IMR-90 (cell line): ENCODE measurements at regions of chr5 and their contacts with region 1.

Region 1: GRCh38 chr5:167565032-167565954 is 726.2 kb upstream of the WWC1 start:
- DNase-seq: peak; percentile 20
- ATAC-seq: peak; percentile 73
- H3K4me3 ChIP-seq: no peak overlapping the region
- H3K27ac ChIP-seq: no peak overlapping the region
- H3K4me1 ChIP-seq: no peaks in the 10 kb centered on the region
- H3K27me3 ChIP-seq: no peaks in the 10 kb centered on the region
- CTCF ChIP-seq: peak; percentile 49
- POLR2A ChIP-seq: no peak
- RAD21 ChIP-seq: peak; percentile 54

Region 2: GRCh38 chr5:165630261-165630778 is 1935.0 kb before region 1 on chr5:
- CTCF ChIA-PET with region 1: no interaction called
- POLR2A ChIA-PET with region 1: no interaction called
- dilution Hi-C with region 1: no loop called
- in situ Hi-C with region 1: loop called (anchors 25 kb)
- intact Hi-C with region 1: loop called (anchors 5 kb)
- DNase-seq: peak; percentile 64
- ATAC-seq: peak; percentile 90
- H3K4me3 ChIP-seq: no peak overlapping the region
- H3K27ac ChIP-seq: no peak overlapping the region
- H3K4me1 ChIP-seq: peaks cover 2% of the 10 kb centered on the region; the same call in 1 of the 2 replicates
- H3K27me3 ChIP-seq: no peaks in the 10 kb centered on the region
- CTCF ChIP-seq: peak; percentile 57
- POLR2A ChIP-seq: no peak
- RAD21 ChIP-seq: peak; percentile 41

Region 3: DNA sequence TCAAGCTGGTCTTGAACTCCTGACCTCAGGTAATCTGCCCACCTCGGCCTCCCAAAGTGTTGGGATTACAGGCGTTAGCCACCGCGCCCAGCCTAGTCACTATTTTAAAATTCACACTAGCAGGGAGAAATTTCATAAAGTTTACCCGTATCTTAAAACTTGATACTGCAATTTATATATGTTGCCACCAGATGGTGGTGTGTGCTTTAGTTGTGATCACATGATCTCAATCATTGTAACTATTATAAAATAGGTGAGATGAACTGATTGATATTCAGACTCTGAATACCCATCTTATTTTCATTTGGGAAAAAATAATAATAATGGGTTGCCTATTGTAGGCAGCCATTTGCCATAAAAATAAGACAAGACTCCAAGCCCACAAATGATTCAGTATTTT is 604.3 kb before region 1 on chr5:
- CTCF ChIA-PET with region 1: no interaction called
- POLR2A ChIA-PET with region 1: no interaction called
- dilution Hi-C with region 1: no loop called
- in situ Hi-C with region 1: no loop called
- intact Hi-C with region 1: loop called (anchors 5 kb)
- DNase-seq: peak; percentile 0
- ATAC-seq: no peak
- H3K4me3 ChIP-seq: no peak overlapping the region
- H3K27ac ChIP-seq: no peak overlapping the region
- H3K4me1 ChIP-seq: no peaks in the 10 kb centered on the region
- H3K27me3 ChIP-seq: no peaks in the 10 kb centered on the region
- CTCF ChIP-seq: peak; percentile 28; the same call in 1 of the 2 replicates
- POLR2A ChIP-seq: no peak
- RAD21 ChIP-seq: 0 out of 2 replicates have a peak, but pooled peaks have one; percentile 10

Region 4: DNA sequence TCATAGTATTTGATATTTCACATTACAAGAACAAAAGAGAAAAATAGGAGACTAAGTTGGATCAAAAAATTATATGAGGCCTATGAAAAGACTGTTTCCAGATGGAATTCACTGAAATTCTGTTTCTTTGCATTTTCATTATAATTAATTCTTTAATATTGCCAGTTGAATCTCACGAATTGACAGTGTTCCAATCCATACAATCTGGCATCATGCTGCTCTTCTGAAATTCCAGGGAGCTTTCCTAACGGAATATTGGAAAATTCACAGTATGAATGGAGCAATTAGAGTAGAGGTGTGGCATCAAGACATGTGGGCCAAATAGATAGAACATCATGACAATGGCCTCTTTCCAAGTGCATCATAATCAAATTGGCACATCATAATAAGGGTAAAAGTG is 452.7 kb before region 1 on chr5:
- CTCF ChIA-PET with region 1: no interaction called
- POLR2A ChIA-PET with region 1: no interaction called
- dilution Hi-C with region 1: no loop called
- in situ Hi-C with region 1: no loop called
- intact Hi-C with region 1: no loop called
- DNase-seq: no peak
- ATAC-seq: no peak
- H3K4me3 ChIP-seq: no peak overlapping the region
- H3K27ac ChIP-seq: no peak overlapping the region
- H3K4me1 ChIP-seq: no peaks in the 10 kb centered on the region
- H3K27me3 ChIP-seq: no peaks in the 10 kb centered on the region
- CTCF ChIP-seq: no peak
- POLR2A ChIP-seq: no peak
- RAD21 ChIP-seq: no peak

Region 5: DNA sequence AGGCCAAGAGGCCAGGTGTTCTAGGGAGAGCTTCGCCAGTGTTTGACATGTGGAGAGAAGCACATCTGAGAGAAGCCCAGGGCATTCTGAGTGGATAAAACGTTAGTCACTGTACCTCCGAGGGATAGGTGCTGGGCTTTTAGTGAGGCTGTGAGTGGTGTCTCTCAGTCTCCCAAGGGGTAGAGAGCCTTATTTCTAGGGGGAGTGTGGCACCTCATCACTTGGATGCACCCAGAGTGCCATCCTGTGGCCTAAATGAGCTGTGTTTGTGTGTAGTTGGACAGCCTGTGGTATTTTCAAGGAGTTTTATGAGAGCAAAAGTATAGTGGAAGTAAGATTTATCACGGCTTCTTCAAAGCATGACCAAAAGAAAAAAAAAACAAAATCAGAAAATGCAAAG is 320.7 kb before region 1 on chr5:
- CTCF ChIA-PET with region 1: no interaction called
- POLR2A ChIA-PET with region 1: no interaction called
- dilution Hi-C with region 1: no loop called
- in situ Hi-C with region 1: no loop called
- intact Hi-C with region 1: loop called (anchors 5 kb)
- DNase-seq: no peak
- ATAC-seq: no peak
- H3K4me3 ChIP-seq: no peak overlapping the region
- H3K27ac ChIP-seq: no peak overlapping the region
- H3K4me1 ChIP-seq: no peaks in the 10 kb centered on the region
- H3K27me3 ChIP-seq: no peaks in the 10 kb centered on the region
- CTCF ChIP-seq: peak; percentile 28
- POLR2A ChIP-seq: no peak
- RAD21 ChIP-seq: no peak

Region 6: DNA sequence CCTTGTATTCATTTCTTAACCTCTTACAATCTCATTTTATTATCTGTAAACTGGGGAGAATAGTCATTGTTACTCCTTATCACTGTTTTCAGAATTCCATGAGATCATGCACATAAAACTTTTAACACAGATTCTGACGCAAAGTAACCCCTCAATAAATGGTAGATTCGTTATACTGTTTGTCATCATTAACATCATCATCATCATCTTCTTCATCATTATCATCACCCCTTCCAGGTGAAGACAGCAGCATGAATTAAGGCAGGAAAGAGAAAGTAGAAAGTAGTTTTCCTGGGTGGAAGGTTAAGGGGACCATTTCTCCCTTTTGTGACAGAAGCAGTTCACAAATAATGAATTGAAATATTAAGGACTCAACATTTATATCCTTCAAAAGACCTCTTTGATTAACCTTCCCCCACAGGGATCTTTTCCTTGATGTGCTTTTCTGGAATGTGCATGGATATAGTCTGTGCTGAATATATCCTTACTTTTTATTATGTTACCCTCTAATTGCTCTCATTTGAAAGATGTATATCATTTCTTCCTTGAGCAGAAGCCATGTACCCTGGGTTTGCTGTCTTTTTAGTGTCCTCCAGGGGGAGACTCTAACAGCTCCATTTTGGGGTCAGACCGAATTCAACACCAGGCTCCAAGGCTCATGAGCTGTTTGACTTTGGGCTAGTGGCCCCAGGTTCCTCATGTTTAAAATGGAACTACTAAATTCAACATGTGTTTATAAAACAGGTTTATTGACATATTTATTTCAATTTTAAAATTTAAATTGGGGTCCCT is 303.8 kb before region 1 on chr5:
- CTCF ChIA-PET with region 1: no interaction called
- POLR2A ChIA-PET with region 1: no interaction called
- dilution Hi-C with region 1: no loop called
- in situ Hi-C with region 1: no loop called
- intact Hi-C with region 1: loop called (anchors 5 kb)
- DNase-seq: no peak
- ATAC-seq: no peak
- H3K4me3 ChIP-seq: no peak overlapping the region
- H3K27ac ChIP-seq: no peak overlapping the region
- H3K4me1 ChIP-seq: no peaks in the 10 kb centered on the region
- H3K27me3 ChIP-seq: no peaks in the 10 kb centered on the region
- CTCF ChIP-seq: no peak
- POLR2A ChIP-seq: no peak
- RAD21 ChIP-seq: peak; percentile 15; the same call in 1 of the 2 replicates